Motor neuron (in vitro differentiated cells): ENCODE measurements at regions of chr13 and their contacts with region 1.

Region 1: DNA sequence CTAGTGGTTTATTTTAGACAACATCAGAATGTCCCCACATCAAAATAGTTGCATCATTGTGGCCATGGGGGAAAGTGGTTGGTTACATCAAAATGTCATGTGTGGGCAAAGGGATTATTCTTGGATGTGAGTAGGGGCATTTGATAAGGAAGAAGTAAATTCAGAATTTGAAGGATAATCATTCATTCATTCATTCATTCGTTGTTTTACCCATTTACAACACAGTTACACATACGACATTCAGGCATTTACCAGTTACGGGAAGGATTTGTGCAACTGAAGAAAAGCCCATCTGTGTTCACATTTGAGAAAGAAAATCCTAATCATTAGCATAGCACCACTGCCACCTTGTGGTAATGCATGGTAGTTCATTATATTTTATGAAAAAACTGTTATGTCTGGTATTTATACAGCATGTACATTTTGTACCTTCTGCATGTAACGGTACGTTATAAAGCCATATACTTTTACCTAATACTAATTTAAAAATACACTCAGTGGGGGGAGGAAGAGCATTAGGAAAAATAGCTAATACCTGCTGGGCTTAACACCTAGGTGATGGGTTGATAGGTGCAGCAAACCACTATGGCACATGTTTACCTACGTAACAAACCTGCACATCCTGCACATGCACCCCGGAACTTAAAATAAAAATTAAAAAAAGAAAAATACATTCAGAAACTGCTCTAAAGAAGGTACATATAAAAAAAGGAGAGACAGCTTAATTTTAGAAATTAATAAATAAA is 62.1 kb downstream of the DGKH start:
- ATAC-seq: peak; percentile 40 to 68 (median 52)
- H3K4me3 ChIP-seq: no peak overlapping the region
- H3K27ac ChIP-seq: no peak overlapping the region
- H3K4me1 ChIP-seq: peaks cover 0 to 3% of the 10 kb centered on the region in 2 donors

Region 2: GRCh38 chr13:41352935-41353840 is 757.4 kb before region 1 on chr13:
- in situ Hi-C with region 1: loop called in 1 of 9 experiments (anchors 25 kb)
- ATAC-seq: peak in 4 of 8 experiments; percentile 19 to 95 (median 88)
- H3K4me3 ChIP-seq: no peak overlapping the region
- H3K27ac ChIP-seq: no peak overlapping the region
- H3K4me1 ChIP-seq: no peaks in the 10 kb centered on the region

Region 3: DNA sequence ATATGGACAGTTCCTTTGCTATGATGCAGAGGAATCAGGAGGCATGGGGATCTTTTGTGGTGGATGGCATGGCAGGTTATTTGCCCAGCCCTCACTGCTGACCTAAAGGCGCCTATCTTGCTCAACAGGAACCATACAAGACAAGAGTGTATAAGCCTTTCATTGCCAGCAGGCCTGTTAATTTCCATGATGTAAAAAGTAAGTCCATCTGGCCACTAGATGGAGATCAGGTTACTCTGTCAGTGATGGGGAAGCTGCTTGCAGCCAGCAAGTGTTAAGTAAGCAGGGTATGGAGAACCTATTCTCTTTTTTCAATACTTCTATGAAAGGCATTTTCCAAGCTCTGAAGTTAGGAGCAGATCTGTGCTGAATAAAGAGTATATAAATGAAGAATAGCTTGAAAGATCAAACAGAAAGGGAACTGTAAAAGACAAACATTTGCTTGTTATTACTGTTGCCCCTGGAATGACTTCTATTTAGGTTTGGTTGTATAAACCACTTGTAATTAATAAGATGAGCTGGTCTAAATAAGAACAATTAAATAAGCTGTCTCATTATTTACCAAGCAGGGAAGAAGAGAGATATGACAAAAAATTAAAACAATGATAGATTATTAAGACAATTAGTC is 442.3 kb before region 1 on chr13:
- in situ Hi-C with region 1: loop called in 2 of 9 experiments (anchors 10 to 25 kb)
- ATAC-seq: peak; percentile 74 to 100 (median 94)
- H3K4me3 ChIP-seq: no peak overlapping the region
- H3K27ac ChIP-seq: no peak overlapping the region
- H3K4me1 ChIP-seq: no peaks in the 10 kb centered on the region

Region 4: GRCh38 chr13:41905600-41906254 is 204.9 kb before region 1 on chr13:
- in situ Hi-C with region 1: loop called in 1 of 9 experiments (anchors 25 kb)
- ATAC-seq: peak in 4 of 8 experiments; percentile 33 to 85 (median 84)
- H3K4me3 ChIP-seq: no peak overlapping the region
- H3K27ac ChIP-seq: no peak overlapping the region
- H3K4me1 ChIP-seq: no peaks in the 10 kb centered on the region